A673 (cell line): ENCODE measurements at regions of chr17 and their contacts with region 1.

Region 1: DNA sequence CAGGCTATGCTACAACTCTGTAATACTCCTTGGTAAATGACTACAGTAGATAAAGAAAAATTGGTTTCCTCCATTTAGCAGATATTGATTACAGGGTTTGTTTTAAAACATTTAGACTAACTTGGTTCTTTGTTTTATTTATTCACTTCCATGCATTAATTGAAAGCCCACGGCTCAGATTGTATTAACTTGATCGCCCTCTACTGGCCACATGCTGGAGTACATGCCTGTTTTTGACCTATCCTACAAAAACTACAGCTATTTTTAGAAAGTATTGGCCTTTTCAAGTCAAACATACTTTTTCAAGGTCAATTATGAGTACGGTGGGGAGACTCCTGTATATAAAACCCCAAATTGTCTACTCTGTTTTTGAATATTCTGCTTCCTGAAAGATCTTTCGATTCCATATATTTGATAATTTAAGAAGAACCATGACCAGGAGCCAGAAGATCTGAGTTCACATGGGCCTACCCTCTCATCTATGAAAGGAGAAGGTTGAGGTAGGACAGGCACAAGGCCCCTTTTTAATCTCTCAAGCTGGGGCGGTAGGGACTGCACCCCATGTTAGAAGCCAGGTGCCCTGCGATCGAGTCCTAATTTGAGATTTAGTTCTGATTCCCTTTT is 51.8 kb downstream of the CA10 start:
- DNase-seq: peak; percentile 59
- H3K4me3 ChIP-seq: no peak overlapping the region
- H3K27ac ChIP-seq: no peak overlapping the region
- H3K4me1 ChIP-seq: no peaks in the 10 kb centered on the region
- H3K27me3 ChIP-seq: no peaks in the 10 kb centered on the region
- CTCF ChIP-seq: peak; percentile 86

Region 2: GRCh38 chr17:51298508-51299371 is 808.0 kb before region 1 on chr17:
- CTCF ChIA-PET with region 1: no interaction called
- POLR2A ChIA-PET with region 1: no interaction called
- intact Hi-C with region 1: loop called (anchors 10 kb)
- DNase-seq: peak; percentile 68
- H3K4me3 ChIP-seq: no peak overlapping the region
- H3K27ac ChIP-seq: no peak overlapping the region
- H3K4me1 ChIP-seq: no peaks in the 10 kb centered on the region
- H3K27me3 ChIP-seq: no peaks in the 10 kb centered on the region
- CTCF ChIP-seq: peak; percentile 82

Region 3: DNA sequence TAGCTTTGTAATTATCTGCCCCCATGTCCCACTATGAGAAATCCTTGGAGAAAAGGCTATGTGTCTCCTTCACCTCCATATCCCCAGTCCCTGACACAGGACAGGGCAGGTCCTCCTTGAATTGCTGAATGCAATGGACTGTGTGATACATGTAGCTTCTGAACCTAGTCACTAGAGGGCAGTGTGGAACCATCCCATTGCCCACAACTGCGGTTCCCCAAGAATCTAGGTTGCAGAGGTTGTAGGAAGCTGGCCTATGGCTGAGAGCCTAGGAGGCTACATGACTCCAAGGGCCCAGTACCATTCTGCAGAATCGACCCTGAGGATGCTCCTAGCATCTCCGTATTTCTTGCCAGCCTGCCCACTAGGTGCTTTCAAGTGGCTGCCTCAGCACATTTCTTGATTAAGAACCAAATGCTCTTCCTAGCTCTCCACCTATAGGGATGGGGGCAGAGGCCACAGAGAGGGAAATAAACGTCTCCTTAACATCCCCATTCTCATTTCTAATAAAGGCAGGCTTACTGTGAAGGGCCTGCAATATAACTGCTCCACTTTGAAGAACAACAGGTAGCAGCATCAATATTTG is 342.3 kb before region 1 on chr17:
- CTCF ChIA-PET with region 1: interaction called, 15 read pairs
- POLR2A ChIA-PET with region 1: no interaction called
- intact Hi-C with region 1: loop called (anchors 2 kb)
- DNase-seq: peak; percentile 70
- H3K4me3 ChIP-seq: no peak overlapping the region
- H3K27ac ChIP-seq: no peak overlapping the region
- H3K4me1 ChIP-seq: no peaks in the 10 kb centered on the region
- H3K27me3 ChIP-seq: peaks cover 12% of the 10 kb centered on the region
- CTCF ChIP-seq: peak; percentile 84

Region 4: GRCh38 chr17:51860954-51861561 is 245.7 kb before region 1 on chr17:
- CTCF ChIA-PET with region 1: interaction called, 3 read pairs
- POLR2A ChIA-PET with region 1: no interaction called
- intact Hi-C with region 1: loop called (anchors 5 kb)
- DNase-seq: peak; percentile 53
- H3K4me3 ChIP-seq: no peak overlapping the region
- H3K27ac ChIP-seq: no peak overlapping the region
- H3K4me1 ChIP-seq: no peaks in the 10 kb centered on the region
- H3K27me3 ChIP-seq: no peaks in the 10 kb centered on the region
- CTCF ChIP-seq: peak; percentile 76